Left lung (tissue), 14 donors: ENCODE measurements at regions of chr18 and their contacts with region 1.

Region 1: DNA sequence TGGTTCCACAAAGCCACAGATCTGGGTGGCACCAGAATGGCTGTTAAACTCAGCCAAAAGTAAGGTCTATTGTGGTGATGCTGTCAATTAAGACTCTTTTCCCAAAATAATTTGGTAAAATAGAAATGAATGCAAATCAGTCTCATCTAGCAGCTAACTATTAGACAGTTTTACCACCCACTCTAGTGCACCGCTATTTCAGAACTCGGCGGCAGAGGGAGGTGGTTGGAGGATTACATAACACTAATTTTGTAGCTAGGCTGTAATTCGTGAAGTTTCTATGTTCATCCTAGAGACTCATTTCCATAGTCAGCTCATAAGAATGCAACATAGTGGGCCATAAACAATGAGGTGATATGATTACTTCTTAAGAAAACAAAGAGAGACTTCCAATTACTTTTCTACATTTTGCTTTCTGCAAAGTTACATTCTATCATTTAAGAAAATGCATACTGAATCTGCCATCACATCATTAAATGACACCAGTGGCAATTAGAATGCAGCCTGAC is 413.8 kb downstream of the FBXO15 start:
- DNase-seq: no peak
- ATAC-seq: no peak
- H3K4me3 ChIP-seq: no peak overlapping the region
- H3K27ac ChIP-seq: no peak overlapping the region
- H3K4me1 ChIP-seq: no peaks in the 10 kb centered on the region
- H3K27me3 ChIP-seq: no peaks in the 10 kb centered on the region
- CTCF ChIP-seq: no peak

Region 2: GRCh38 chr18:73679941-73680712 is 53.7 kb before region 1 on chr18:
- intact Hi-C with region 1: loop called in 1 of 2 experiments (anchors 5 kb)
- DNase-seq: no peak
- ATAC-seq: no peak
- H3K4me3 ChIP-seq: no peak overlapping the region
- H3K27ac ChIP-seq: no peak overlapping the region
- H3K4me1 ChIP-seq: no peaks in the 10 kb centered on the region
- H3K27me3 ChIP-seq: no peaks in the 10 kb centered on the region
- CTCF ChIP-seq: no peak

Region 3: DNA sequence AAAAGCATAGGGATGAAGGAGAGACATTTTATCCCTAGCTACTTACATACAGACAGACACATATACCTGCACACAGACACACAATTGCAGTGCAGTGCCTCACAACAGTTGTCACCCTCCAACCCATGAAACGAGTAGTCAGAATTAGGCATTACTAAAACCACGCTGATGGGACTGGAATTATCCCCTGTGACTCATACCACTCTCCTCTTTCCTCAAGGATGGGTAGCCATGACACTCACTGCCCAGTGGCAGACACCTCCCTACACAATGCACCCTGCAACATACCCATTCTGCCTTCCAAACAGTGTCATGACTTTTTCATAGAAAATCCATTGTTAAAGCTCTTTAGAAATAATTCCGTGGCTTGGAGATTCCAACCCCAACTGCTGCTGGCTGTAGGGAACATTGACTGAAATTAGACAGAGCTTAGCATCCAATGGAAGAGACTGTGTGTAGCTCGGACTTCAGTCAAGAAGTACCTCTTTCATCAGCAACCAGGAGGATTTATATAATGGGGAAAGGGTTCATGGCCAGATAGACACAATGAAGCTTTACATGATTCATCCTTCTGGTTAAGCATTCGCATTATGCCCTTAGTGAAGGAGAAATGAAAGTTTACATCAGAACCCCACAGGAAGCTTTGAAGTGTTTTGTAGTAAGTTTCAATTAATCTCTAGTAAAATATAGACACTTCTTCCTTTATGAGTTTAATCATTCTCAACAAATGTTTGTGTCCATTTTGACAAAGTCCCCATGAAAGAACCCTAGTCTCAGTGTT is 258.6 kb after region 1 on chr18:
- intact Hi-C with region 1: no loop called
- DNase-seq: no peak
- ATAC-seq: no peak
- H3K4me3 ChIP-seq: no peak overlapping the region
- H3K27ac ChIP-seq: no peak overlapping the region
- H3K4me1 ChIP-seq: no peaks in the 10 kb centered on the region
- H3K27me3 ChIP-seq: no peaks in the 10 kb centered on the region
- CTCF ChIP-seq: no peak